Mammary epithelial cell (primary cell): ENCODE measurements at regions of chr17 and their contacts with region 1.

Region 1: GRCh38 chr17:7435221-7435675 is at the start of gene TMEM102:
- DNase-seq: peak; percentile 97
- H3K4me3 ChIP-seq: peak within 1 kb of the TSS; percentile 60 to 85 (median 68)
- H3K27ac ChIP-seq: peak within 1 kb of the TSS; percentile 81
- H3K4me1 ChIP-seq: peaks cover 38% of the 10 kb centered on the region
- H3K27me3 ChIP-seq: no peaks in the 10 kb centered on the region
- CTCF ChIP-seq: no peak
- total RNA-seq, gene TMEM102: 14.5 to 16.0 TPM

Region 2: GRCh38 chr17:7234083-7234951 is 200.9 kb before region 1 on chr17 and contains the start of gene DVL2:
- CTCF ChIA-PET with region 1: no interaction called
- dilution Hi-C with region 1: no loop called
- in situ Hi-C with region 1: no loop called
- intact Hi-C with region 1: no loop called
- DNase-seq: peak; percentile 86
- H3K4me3 ChIP-seq: peak within 1 kb of the TSS; percentile 68 to 95 (median 84)
- H3K27ac ChIP-seq: peak within 1 kb of the TSS; percentile 91
- H3K4me1 ChIP-seq: peaks cover 27% of the 10 kb centered on the region
- H3K27me3 ChIP-seq: no peaks in the 10 kb centered on the region
- CTCF ChIP-seq: no peak
- total RNA-seq, gene DVL2: 43.6 to 48.0 TPM

Region 3: GRCh38 chr17:7252176-7253043 is 182.8 kb before region 1 on chr17 and contains the start of gene ELP5:
- CTCF ChIA-PET with region 1: no interaction called
- dilution Hi-C with region 1: no loop called
- in situ Hi-C with region 1: no loop called
- intact Hi-C with region 1: loop called (anchors 1 kb)
- DNase-seq: peak; percentile 92
- H3K4me3 ChIP-seq: peak within 1 kb of the TSS; percentile 86 to 89 (median 88)
- H3K27ac ChIP-seq: peak within 1 kb of the TSS; percentile 96
- H3K4me1 ChIP-seq: peaks cover 15% of the 10 kb centered on the region
- H3K27me3 ChIP-seq: no peaks in the 10 kb centered on the region
- CTCF ChIP-seq: peak in 1 of 2 donors; percentile 20
- total RNA-seq, gene ELP5: 18.8 to 52.0 TPM

Region 4: DNA sequence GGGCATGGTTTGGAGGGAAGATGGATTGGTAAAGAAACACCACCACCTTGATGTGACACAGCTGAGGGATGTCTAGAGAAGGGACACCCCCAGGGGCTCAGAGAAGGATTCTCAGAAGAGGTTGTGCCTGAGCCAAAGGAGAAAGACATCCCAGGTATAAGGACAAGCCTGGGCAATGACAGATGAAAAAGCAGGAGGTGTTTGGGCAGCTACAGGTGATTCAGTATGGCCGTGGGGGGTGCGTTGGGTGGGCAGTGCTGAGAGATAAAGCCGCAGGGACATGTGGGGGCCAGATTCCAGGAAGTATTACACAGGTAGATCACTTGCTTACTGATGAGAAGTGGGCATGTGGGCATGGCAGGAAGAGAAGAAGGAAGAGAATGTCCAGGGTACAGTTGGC is 73.3 kb before region 1 on chr17:
- CTCF ChIA-PET with region 1: interaction called, 12 read pairs
- dilution Hi-C with region 1: no loop called
- in situ Hi-C with region 1: no loop called
- intact Hi-C with region 1: no loop called
- DNase-seq: no peak
- H3K4me3 ChIP-seq: no peak overlapping the region
- H3K27ac ChIP-seq: peak overlapping the region; percentile 38
- H3K4me1 ChIP-seq: peaks cover 22% of the 10 kb centered on the region
- H3K27me3 ChIP-seq: no peaks in the 10 kb centered on the region
- CTCF ChIP-seq: no peak

Region 5: DNA sequence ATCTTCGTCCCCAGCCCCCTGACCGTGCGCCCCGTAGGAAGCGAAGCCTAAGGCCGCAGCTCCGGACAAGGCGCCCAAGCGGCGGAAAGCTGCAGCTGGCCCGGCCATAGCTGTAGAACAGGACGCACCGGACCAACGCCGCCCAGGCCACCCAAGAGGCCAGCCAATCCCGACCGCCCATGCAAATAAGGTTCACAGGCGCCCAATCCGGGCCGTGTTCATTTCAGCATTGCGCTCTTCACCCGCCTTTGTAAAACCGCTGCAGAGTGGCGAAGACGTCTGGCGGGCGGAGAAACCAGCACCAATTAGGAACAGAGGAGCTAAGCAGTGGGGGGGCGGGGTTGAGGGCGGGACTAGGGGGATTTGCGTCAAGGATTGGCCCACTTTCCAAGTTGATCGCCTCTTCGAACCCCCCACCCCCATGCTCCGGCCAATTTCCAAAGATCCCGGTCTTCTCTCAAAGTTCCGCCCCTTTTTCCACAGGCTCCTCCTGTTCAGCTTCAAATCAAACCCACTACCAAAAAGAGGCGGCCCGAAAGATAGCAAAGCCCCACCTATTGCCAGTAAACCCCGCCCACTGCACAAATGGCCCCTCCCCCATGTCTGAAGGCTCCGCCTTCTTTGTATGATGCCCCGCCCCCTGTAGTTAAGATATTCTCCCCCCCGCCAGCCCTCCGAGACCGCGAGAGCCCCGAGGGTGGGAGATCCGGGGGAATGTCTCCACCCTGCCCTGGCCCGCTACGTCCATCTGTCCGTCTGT is 31.1 kb before region 1 on chr17 and contains the start of gene TMEM256:
- CTCF ChIA-PET with region 1: interaction called, 11 read pairs
- dilution Hi-C with region 1: no loop called
- in situ Hi-C with region 1: loop called in 1 of 2 experiments (anchors 5 kb)
- intact Hi-C with region 1: loop called (anchors 2 kb)
- DNase-seq: peak; percentile 99
- H3K4me3 ChIP-seq: peak within 1 kb of the TSS; percentile 66 to 86 (median 70)
- H3K27ac ChIP-seq: peak within 1 kb of the TSS; percentile 42
- H3K4me1 ChIP-seq: peaks cover 7% of the 10 kb centered on the region
- H3K27me3 ChIP-seq: no peaks in the 10 kb centered on the region
- CTCF ChIP-seq: no peak
- total RNA-seq, gene TMEM256: 43.8 to 70.8 TPM

Region 6: DNA sequence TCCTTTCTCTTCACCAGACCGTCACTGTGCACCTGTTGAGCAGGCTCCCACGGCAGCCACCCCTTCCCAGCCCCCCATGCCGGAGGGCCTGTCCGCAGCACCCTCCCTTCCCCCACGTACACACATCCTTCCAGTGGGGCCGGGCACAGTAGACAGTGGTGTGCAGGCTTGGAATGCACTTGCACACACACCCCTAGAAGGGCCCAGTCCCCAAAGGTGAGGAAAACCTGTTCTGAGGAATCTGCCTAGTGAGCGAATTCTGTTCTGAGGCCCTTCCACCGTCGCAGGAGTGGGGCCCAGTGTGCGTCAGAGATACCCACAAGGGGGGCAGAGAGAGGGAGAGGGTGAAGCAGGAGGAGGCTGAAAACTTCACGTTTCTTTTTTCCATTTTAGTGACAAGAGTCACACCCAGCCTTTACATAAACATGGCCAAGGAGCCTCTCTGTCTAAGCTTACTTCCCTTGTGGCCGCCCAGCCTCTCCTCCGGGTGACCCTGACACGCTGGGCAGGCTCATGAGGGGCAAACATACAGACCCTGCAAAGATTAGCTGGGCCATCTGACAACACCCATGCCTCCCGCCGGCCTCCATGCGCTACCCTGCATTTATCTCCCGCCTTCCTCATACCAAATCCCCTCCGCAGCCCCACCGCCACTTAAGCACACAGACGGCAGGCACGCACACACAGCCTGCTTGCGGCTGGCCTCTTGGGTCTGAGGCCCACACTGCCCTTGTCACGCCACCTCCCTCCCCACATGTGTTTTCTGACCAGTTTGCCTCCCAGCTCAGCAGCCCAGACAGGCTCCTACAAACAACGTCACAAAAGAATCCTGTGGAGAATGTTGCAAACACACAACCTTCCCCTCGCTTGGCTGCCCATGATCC is 42.4 kb after region 1 on chr17:
- CTCF ChIA-PET with region 1: interaction called, 6 read pairs
- dilution Hi-C with region 1: loop called (anchors 5 kb)
- in situ Hi-C with region 1: loop called in 1 of 2 experiments (anchors 5 kb)
- intact Hi-C with region 1: loop called (anchors 2 kb)
- DNase-seq: no peak
- H3K4me3 ChIP-seq: peak overlapping the region; percentile 50 to 76 (median 53)
- H3K27ac ChIP-seq: peak overlapping the region; percentile 67
- H3K4me1 ChIP-seq: peaks cover 45% of the 10 kb centered on the region
- H3K27me3 ChIP-seq: no peaks in the 10 kb centered on the region
- CTCF ChIP-seq: no peak

Region 7: GRCh38 chr17:7589204-7589868 is 154.1 kb after region 1 on chr17:
- CTCF ChIA-PET with region 1: no interaction called
- dilution Hi-C with region 1: no loop called
- in situ Hi-C with region 1: no loop called
- intact Hi-C with region 1: loop called (anchors 1 kb)
- DNase-seq: peak; percentile 83
- H3K4me3 ChIP-seq: peak overlapping the region; percentile 69 to 82 (median 69)
- H3K27ac ChIP-seq: peak overlapping the region; percentile 77
- H3K4me1 ChIP-seq: peaks cover 54% of the 10 kb centered on the region
- H3K27me3 ChIP-seq: no peaks in the 10 kb centered on the region
- CTCF ChIP-seq: peak; percentile 68 to 92